ENCODE measurements at regions of chr6 and their contacts with region 1.

Region 1: DNA sequence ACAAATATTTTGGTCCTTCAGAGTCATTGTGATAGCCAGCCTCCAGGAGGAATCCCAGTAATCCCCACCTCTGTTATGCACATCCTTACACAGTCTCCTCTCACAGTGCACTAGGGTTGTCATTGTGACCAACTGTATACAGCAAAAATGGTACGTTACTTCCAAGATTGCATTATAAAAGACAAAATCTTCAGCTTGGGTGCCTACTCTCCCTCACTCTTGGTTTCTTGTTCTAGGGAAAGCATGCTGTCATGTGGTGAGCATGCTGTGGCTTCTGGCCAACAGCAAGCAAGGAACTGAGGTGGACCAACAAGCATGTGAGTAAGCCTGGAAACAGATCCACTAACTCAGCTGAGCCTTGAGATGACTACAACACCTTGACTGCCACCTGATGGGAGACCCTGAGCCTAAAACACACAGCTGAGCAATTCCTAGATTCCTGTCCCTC is 130.1 kb upstream of the DST start:
- DNase-seq: peak; percentile 35 to 79
- ATAC-seq: peak; percentile 85 to 95 (median 90)
- H3K4me3 ChIP-seq: no peak overlapping the region
- H3K27ac ChIP-seq: peak overlapping the region; percentile 78
- H3K4me1 ChIP-seq: peaks cover 75% of the 10 kb centered on the region
- H3K27me3 ChIP-seq: no peaks in the 10 kb centered on the region
- CTCF ChIP-seq: no peak

Region 2: DNA sequence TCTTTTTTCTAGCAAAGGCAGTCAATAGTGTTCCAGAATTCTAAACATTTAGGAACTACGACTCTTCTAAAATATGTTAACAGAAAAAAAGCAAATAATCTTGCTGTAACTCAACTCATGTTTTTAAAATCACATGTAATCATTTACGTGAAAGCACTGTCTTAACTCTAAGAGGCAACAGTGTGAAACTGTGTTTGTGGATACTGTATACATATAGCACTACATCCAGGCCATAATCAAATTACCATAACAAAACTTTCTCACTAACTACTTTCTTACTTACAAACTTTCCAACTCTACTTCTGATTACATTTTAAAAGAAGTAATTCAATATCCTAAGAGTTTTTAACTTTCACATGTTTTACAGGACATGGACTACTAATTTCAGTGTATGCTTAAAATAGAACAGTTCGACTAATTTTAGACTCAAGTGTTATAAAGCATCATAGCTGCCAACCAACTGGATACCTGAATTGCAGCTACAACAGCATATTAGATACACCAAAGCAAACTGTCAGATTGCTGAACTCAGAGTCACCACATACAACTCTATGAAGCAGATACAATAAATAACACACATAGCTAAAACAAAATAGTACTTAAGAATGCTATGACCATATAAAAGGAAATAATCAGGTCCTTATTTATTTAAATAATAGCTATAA is 60.5 kb after region 1 on chr6:
- intact Hi-C with region 1: loop called in 1 of 2 experiments (anchors 5 kb)
- DNase-seq: no peak
- ATAC-seq: peak; percentile 77 to 91 (median 86)
- H3K4me3 ChIP-seq: peak overlapping the region; percentile 15
- H3K27ac ChIP-seq: peak overlapping the region; percentile 73
- H3K4me1 ChIP-seq: peaks cover 62% of the 10 kb centered on the region
- H3K27me3 ChIP-seq: no peaks in the 10 kb centered on the region
- CTCF ChIP-seq: no peak

Region 3: GRCh38 chr6:56890683-56891429 is 118.1 kb after region 1 on chr6:
- intact Hi-C with region 1: no loop called
- DNase-seq: no peak
- ATAC-seq: no peak
- H3K4me3 ChIP-seq: no peak overlapping the region
- H3K27ac ChIP-seq: no peak overlapping the region
- H3K4me1 ChIP-seq: no peaks in the 10 kb centered on the region
- H3K27me3 ChIP-seq: no peaks in the 10 kb centered on the region
- CTCF ChIP-seq: no peak

Measured in psoas muscle (tissue), 8 donors.